WTC11 (cell line): ENCODE measurements at regions of chr1 and their contacts with region 1.

Region 1: DNA sequence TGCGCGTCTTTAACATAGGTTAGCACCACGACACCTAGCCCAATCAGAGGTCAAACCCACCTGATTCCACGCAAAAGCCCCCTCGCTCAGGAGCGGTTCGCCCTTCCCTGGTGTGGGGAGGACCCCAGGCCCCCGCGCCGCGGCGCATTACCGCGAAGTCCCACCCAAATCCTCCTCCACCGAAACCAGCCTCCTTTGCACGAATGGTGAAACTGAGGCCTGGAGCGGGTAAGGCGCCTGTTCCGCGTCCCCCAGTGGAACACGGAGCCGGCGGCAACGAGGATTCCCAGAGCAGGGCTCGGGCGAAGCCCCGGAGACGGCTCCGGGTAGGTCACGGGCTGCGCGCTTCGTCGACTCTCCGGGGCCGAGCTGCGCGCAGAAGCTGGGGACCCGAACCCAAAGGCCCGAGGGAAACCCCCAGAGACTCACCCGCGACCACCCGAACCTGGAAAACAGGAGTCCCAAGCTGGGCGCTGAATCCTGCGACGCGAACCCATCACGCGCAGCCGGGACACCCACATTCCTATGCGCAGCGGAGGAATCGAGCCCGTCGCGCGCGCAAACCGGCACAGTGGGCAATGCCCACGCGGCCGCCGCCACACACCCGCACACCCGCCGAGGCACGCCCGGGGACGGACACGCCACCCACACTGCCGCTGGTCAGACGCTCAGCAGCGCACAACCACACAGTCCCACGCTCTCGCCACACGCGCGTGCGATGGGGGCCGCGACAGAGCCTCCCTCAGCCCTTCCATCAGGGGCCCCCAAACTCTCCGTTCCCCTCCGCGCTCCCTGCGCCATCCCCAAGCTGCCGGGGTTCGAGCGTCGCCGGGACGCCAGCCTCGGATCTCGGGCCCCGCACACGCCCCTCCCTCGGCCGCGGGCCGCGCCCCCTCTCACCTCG is 507 bp downstream of the GLIS1 start:
- DNase-seq: peak; percentile 22
- ATAC-seq: no peak
- H3K4me3 Mint-ChIP-seq: peak overlapping the region; percentile 56
- H3K27ac Mint-ChIP-seq: no peak overlapping the region
- H3K4me1 Mint-ChIP-seq: peaks cover 7% of the 10 kb centered on the region
- H3K27me3 Mint-ChIP-seq: peaks cover 91% of the 10 kb centered on the region
- CTCF ChIP-seq: no peak

Region 2: DNA sequence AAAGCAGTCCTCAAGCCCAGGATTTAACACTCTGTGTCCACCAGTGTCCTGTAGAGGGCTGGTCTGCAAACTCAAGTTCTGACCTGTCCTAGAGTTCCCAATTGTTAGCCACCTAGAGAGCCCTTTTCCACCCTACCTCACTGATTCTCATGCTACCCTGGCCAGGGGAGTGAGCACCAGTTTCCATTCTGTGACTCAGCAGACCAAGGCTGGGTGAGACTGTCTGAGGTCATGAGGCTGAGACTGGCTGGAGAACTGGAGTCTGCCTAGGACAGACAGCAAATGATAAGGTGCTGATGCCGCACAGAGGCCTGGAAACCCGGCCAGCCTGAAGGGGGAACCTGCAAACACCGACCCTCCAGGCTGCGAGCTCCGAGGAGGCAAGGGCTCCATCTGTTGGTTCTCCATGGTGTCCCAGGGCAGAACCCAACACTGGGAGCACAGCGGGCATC is 13.2 kb before region 1 on chr1:
- CTCF ChIA-PET with region 1: interaction called, 17 read pairs
- POLR2A ChIA-PET with region 1: interaction called, 6 read pairs
- DNase-seq: peak; percentile 80
- ATAC-seq: peak; percentile 98
- H3K4me3 Mint-ChIP-seq: no peak overlapping the region
- H3K27ac Mint-ChIP-seq: 0 out of 2 replicates have a peak overlapping the region, but pooled peaks have one; percentile 65
- H3K4me1 Mint-ChIP-seq: peaks cover 6% of the 10 kb centered on the region
- H3K27me3 Mint-ChIP-seq: no peaks in the 10 kb centered on the region; the same call in 1 of the 2 replicates
- CTCF ChIP-seq: no peak